ENCODE measurements at regions of chr1 and their contacts with region 1.

Region 1: GRCh38 chr1:233916706-233917105 is 12.2 kb downstream of the SLC35F3 start:
- DNase-seq: no peak
- H3K4me3 ChIP-seq: no peak overlapping the region
- H3K27ac ChIP-seq: no peak overlapping the region
- H3K4me1 ChIP-seq: peaks cover 0 to 3% (median 0%) of the 10 kb centered on the region in 4 experiments; a peak in 1 of 7 replicates
- H3K27me3 ChIP-seq: no peaks in the 10 kb centered on the region
- CTCF ChIP-seq: no peak
- EP300 ChIP-seq: no peak
- POLR2A ChIP-seq: no peak
- RAD21 ChIP-seq: no peak

Region 2: GRCh38 chr1:234065794-234066447 is 149.2 kb after region 1 on chr1:
- CTCF ChIA-PET with region 1: interaction called, 14 read pairs
- POLR2A ChIA-PET with region 1: no interaction called
- DNase-seq: peak; percentile 38 to 95
- H3K4me3 ChIP-seq: no peak overlapping the region
- H3K27ac ChIP-seq: no peak overlapping the region
- H3K4me1 ChIP-seq: no peaks in the 10 kb centered on the region
- H3K27me3 ChIP-seq: no peaks in the 10 kb centered on the region
- CTCF ChIP-seq: peak; percentile 79 to 81 (median 80)
- EP300 ChIP-seq: no peak
- POLR2A ChIP-seq: no peak
- RAD21 ChIP-seq: peak; percentile 85 to 87